ENCODE measurements at regions of chr6 and their contacts with region 1.

Region 1: GRCh38 chr6:7992002-7992815 is 72.0 kb downstream of the BLOC1S5 start:
- DNase-seq: peak; percentile 77

Region 2: DNA sequence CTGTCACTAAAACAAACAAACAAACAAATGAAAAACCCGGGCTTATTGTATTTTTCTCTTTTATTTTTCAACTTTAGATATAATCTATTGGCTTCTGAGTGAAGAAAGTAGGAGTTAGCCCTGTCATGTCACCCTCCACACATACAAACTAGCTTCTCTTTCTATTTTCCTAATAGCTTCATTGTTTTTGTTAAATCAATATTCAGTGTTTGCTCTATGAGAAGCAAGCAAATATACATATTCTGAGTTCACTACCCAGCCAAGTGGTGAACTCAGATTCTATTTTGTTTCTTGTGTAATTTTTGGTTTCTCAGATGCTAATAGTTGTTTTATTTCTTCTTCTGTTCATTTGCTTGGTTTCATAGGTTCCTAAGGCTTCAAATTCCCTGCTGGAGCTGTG is 335.9 kb before region 1 on chr6:
- in situ Hi-C with region 1: no loop called
- DNase-seq: no peak

Region 3: DNA sequence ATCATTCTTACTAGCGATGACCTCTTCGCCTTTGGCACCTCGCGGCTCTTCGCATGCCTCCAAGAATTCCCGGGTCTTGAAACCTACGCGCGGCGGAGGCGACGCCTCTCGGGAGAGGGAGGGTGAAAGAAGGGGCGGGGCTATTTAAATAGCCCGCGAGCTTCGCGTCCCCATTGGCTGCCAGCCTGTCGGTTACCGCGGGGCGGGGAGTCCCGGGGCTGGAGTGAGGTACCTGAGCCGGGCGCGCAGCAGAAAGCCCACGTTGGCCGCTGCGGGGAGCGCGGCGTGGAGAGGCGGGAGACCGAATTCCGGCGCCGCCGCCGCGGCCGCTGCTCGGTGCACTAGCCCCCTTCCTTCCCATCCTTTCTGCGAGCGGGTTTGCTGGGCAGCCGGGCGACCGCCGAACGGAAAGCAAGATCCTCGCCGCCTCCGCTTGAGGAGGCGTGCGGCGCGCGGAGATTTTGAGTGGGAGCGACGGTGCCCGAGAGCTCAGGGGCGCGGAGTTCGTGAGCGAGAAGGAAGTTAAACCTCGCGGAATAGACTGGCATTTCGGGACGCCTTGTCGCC is 266.3 kb before region 1 on chr6 and contains the start of gene BMP6:
- in situ Hi-C with region 1: loop called (anchors 25 kb)
- DNase-seq: peak; percentile 89